OCI-LY7 (cell line): ENCODE measurements at regions of chr10 and their contacts with region 1.

Region 1: GRCh38 chr10:43407576-43408330 is 1.2 kb downstream of the HNRNPF start:
- DNase-seq: peak; percentile 89
- H3K4me3 ChIP-seq: peak overlapping the region; percentile 92
- H3K27ac ChIP-seq: peak overlapping the region; percentile 82
- H3K4me1 ChIP-seq: peaks cover 46% of the 10 kb centered on the region
- CTCF ChIP-seq: peak; percentile 66

Region 2: DNA sequence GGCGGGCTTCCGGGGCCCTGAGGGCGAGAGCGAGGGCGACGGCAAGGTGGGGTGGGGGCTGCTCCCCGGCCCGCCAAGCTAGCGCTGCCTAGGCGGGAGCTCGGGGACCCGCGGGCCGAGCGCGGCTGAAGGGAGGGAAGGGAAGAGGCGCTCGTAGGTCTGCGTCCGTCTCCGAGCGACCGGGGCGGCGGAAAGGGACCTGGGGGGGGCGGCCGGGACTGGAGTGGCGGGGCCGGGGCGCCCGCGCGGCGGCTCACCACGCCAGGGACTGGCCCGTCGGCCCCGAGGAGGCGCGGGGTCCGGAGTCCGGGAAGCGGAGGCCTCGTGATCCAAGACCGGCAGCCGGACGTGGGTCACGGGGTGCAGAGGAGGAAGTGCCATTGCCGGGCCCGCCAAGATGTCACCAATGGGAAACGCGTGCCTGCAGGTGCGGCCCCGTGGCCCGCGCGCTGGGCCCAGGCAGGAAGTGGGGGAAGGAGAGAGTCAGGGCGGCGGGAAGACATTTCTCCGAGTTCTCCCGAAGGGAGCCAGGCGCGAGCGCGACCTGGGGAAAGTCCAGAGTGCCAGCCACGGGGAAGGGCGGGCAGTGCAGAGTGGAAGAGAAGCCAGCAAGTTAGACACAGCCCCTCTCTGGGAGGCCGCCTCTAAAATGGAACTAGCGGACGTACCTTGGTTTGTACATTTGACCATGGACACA is 10.7 kb before region 1 on chr10:
- CTCF ChIA-PET with region 1: no interaction called
- POLR2A ChIA-PET with region 1: interaction called, 10 read pairs
- intact Hi-C with region 1: loop called (anchors 1 kb)
- DNase-seq: peak; percentile 94
- H3K4me3 ChIP-seq: peak overlapping the region; percentile 92
- H3K27ac ChIP-seq: peak overlapping the region; percentile 82
- H3K4me1 ChIP-seq: peaks cover 63% of the 10 kb centered on the region
- CTCF ChIP-seq: no peak

Region 3: GRCh38 chr10:43420369-43421200 is 12.8 kb after region 1 on chr10:
- CTCF ChIA-PET with region 1: interaction called, 4 read pairs
- POLR2A ChIA-PET with region 1: interaction called, 8 read pairs
- intact Hi-C with region 1: loop called (anchors 1 kb)
- DNase-seq: peak; percentile 86
- H3K4me3 ChIP-seq: peak overlapping the region; percentile 65
- H3K27ac ChIP-seq: peak overlapping the region; percentile 88
- H3K4me1 ChIP-seq: peaks cover 53% of the 10 kb centered on the region
- CTCF ChIP-seq: peak; percentile 63

Region 4: GRCh38 chr10:43436400-43437140 is 28.8 kb after region 1 on chr10 and contains the start of gene ZNF487:
- CTCF ChIA-PET with region 1: no interaction called
- POLR2A ChIA-PET with region 1: interaction called, 6 read pairs
- intact Hi-C with region 1: loop called (anchors 2 kb)
- DNase-seq: peak; percentile 89
- H3K4me3 ChIP-seq: peak within 1 kb of the TSS; percentile 81
- H3K27ac ChIP-seq: peak within 1 kb of the TSS; percentile 33
- H3K4me1 ChIP-seq: peaks cover 33% of the 10 kb centered on the region
- CTCF ChIP-seq: 0 out of 2 replicates have a peak, but pooled peaks have one; percentile 28
- total RNA-seq, gene ZNF487: 6.5 and 8.1 TPM in 2 replicates

Region 5: GRCh38 chr10:43453266-43453831 is 45.6 kb after region 1 on chr10:
- CTCF ChIA-PET with region 1: interaction called, 3 read pairs
- POLR2A ChIA-PET with region 1: interaction called, 13 read pairs
- intact Hi-C with region 1: no loop called
- DNase-seq: peak; percentile 60
- H3K4me3 ChIP-seq: peak overlapping the region; percentile 61
- H3K27ac ChIP-seq: peak overlapping the region; percentile 100
- H3K4me1 ChIP-seq: peaks cover 55% of the 10 kb centered on the region
- CTCF ChIP-seq: no peak